Left ventricle myocardium inferior (tissue), 1 donor: ENCODE measurements at regions of chr10 and their contacts with region 1.

Region 1: GRCh38 chr10:72048450-72049124 is 39.8 kb downstream of the SPOCK2 start:
- DNase-seq: peak; percentile 91
- H3K4me3 ChIP-seq: no peak overlapping the region
- H3K27ac ChIP-seq: no peak overlapping the region
- H3K4me1 ChIP-seq: peaks cover 22% of the 10 kb centered on the region
- H3K27me3 ChIP-seq: no peaks in the 10 kb centered on the region
- CTCF ChIP-seq: peak; percentile 99

Region 2: DNA sequence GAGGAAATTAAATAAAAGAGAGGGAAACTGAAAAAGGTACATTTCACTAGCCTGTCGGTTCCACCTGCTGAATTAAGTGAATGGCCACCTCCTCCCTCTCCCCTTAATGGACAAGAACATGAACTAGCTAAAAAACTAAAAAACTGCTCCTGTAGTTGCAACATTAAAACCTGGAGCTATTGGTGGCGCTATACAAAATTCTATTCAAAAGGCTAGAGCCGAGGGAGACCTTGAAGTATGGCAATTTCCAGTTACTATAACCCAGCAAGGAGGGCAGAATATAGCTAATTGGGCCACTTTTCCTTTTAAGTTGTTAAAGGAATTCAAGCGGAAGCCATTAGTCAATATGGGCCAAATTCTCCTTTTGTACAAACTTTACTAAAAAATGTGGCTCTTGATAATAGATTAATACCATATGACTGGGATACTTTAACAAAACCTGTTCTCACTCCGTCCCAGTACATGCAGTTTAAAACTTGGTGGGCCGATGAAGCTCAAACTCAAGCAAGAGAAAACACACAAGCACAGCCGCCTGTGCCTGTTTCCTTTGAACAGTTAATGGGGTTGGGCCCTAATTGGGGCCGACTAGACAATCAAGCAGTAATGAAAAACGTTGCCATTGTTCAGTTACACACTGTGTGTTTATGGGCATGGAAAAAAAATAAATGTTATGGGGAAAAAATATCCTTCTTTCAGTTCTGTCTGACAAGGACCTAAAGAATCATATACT is 90.9 kb before region 1 on chr10:
- intact Hi-C with region 1: loop called (anchors 5 kb)
- DNase-seq: no peak
- H3K4me3 ChIP-seq: no peak overlapping the region
- H3K27ac ChIP-seq: no peak overlapping the region
- H3K4me1 ChIP-seq: peaks cover 12% of the 10 kb centered on the region
- H3K27me3 ChIP-seq: no peaks in the 10 kb centered on the region
- CTCF ChIP-seq: no peak

Region 3: GRCh38 chr10:72088889-72089575 is 40.4 kb after region 1 on chr10:
- intact Hi-C with region 1: no loop called
- DNase-seq: peak; percentile 62
- H3K4me3 ChIP-seq: peak overlapping the region; percentile 71
- H3K27ac ChIP-seq: peak overlapping the region; percentile 89
- H3K4me1 ChIP-seq: peaks cover 42% of the 10 kb centered on the region
- H3K27me3 ChIP-seq: peaks cover 19% of the 10 kb centered on the region
- CTCF ChIP-seq: no peak